ENCODE measurements at regions of chr1 and their contacts with region 1.

Region 1: GRCh38 chr1:28668191-28668955 is at the start of gene GMEB1:
- DNase-seq: peak; percentile 69 to 87
- ATAC-seq: peak; percentile 89 to 94
- H3K4me3 ChIP-seq: peak within 1 kb of the TSS; percentile 100
- H3K27ac ChIP-seq: peak within 1 kb of the TSS; percentile 100
- H3K4me1 ChIP-seq: peaks cover 4% of the 10 kb centered on the region; the same call in 1 of the 3 replicates
- CTCF ChIP-seq: no peak
- EP300 ChIP-seq: no peak
- POLR2A ChIP-seq: no peak
- RAD21 ChIP-seq: no peak
- polyA plus RNA-seq, gene GMEB1: 6.9 and 7.1 TPM in 2 replicates

Region 2: DNA sequence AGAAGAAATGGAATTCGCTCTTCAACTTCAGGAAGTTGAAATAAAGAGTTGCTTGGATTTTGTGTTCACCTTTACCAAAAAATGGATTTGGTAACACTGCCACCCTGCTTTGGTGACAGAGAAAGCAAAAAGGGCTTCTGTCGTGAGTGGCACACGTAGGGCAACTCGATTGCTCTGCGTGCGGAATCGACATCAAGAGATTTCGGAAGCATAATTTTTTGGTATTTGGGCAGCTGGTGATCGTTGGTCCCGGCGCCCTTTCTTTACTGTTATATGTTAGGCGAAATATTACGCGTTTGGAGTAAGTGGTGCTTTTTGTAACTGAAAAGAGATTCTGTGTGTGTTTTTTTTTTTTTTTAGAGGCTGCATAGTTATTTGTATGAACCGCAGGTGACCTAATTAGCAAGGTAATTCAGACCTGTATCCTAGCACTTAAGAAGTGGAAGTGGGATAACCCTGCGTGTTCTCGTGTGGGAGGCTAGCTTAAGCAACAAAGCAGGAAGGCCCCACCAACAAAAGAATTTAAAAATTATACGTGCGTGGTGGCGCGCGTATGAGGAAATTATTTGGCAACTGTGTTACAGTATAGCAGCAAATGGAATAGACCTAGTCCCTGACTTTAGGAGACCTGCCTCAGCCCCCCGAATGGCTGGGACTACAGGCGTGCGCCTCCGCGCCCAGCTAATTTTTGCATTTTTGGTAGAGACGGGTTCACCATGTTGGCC is 19.7 kb before region 1 on chr1 and contains the start of gene RNU11:
- CTCF ChIA-PET with region 1: no interaction called
- POLR2A ChIA-PET with region 1: interaction called, 19 read pairs
- DNase-seq: peak; percentile 77 to 97
- ATAC-seq: peak; percentile 88 to 93
- H3K4me3 ChIP-seq: peak within 1 kb of the TSS; percentile 40
- H3K27ac ChIP-seq: peak within 1 kb of the TSS; percentile 96 to 97
- H3K4me1 ChIP-seq: peaks cover 15% of the 10 kb centered on the region; the same call in 2 of the 3 replicates
- CTCF ChIP-seq: no peak
- EP300 ChIP-seq: 0 out of 5 replicates have a peak, but pooled peaks of 1 of the 2 experiments have one; percentile 29
- POLR2A ChIP-seq: peak; percentile 99
- RAD21 ChIP-seq: no peak
- polyA plus RNA-seq, gene RNU11: not detected in 2 replicates

Region 3: DNA sequence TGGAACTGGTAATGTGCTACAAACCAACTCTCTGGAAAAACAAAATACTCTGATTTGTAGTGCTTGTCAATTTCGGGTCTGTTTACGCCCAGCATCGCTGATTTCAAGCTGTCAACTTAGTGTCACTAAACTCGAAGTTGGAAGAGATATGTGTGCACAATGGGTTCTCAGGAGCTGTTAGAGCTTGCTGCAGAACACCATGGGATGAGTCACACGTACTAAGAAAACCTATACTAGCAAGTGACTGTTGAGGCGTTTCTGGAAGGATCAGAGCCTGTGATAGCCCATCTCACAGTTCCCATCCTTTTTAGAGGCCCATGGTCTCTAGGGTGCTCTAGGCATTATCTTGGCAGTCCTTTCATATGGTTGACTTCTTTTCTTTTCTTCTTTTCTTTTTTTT is 14.5 kb after region 1 on chr1:
- CTCF ChIA-PET with region 1: no interaction called
- POLR2A ChIA-PET with region 1: no interaction called
- DNase-seq: no peak
- ATAC-seq: no peak
- H3K4me3 ChIP-seq: no peak overlapping the region
- H3K27ac ChIP-seq: no peak overlapping the region
- H3K4me1 ChIP-seq: no peaks in the 10 kb centered on the region
- CTCF ChIP-seq: no peak
- EP300 ChIP-seq: no peak
- POLR2A ChIP-seq: no peak
- RAD21 ChIP-seq: no peak